Endothelial cell of umbilical vein (primary cell): ENCODE measurements at regions of chr15 and their contacts with region 1.

Region 1: GRCh38 chr15:79853458-79854328 is 43.1 kb downstream of the MTHFS start:
- DNase-seq: peak; percentile 88
- H3K4me3 ChIP-seq: no peak overlapping the region
- H3K27ac ChIP-seq: no peak overlapping the region
- H3K4me1 ChIP-seq: no peaks in the 10 kb centered on the region
- H3K27me3 ChIP-seq: no peaks in the 10 kb centered on the region
- CTCF ChIP-seq: peak; percentile 93 to 95
- POLR2A ChIP-seq: no peak

Region 2: DNA sequence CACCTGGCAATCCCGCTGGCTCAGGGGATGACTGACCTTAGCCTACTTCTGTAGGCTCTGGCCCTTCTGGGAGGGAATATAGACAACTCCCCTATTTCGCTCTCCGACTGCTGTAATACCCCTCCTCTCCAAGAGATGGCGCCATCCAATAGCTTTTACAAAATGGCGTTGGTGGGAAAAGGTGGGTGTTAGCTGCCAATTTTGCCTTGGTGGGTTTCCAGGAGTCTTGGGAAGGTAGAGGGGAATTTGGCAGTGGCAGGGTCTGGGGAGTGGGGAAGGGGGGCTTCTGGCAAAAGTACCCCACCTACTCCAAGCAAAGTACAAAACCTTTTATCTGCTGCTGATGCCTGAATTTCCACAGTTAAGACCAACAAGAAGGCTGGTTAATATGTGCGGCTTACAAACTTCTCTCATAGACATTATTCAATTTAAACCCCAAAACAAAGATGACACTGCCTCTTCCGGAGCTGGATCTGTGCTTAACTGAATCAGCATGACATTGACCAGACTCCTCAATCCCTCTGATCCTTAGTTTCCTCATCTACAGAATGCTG is 825.2 kb before region 1 on chr15:
- CTCF ChIA-PET with region 1: interaction called, 13 read pairs
- POLR2A ChIA-PET with region 1: no interaction called
- dilution Hi-C with region 1: no loop called
- intact Hi-C with region 1: loop called (anchors 2 kb)
- DNase-seq: peak; percentile 31
- H3K4me3 ChIP-seq: no peak overlapping the region
- H3K27ac ChIP-seq: no peak overlapping the region
- H3K4me1 ChIP-seq: no peaks in the 10 kb centered on the region
- H3K27me3 ChIP-seq: no peaks in the 10 kb centered on the region
- CTCF ChIP-seq: peak; percentile 78 to 80
- POLR2A ChIP-seq: no peak

Region 3: GRCh38 chr15:79364571-79365240 is 489.0 kb before region 1 on chr15:
- CTCF ChIA-PET with region 1: interaction called, 28 read pairs
- POLR2A ChIA-PET with region 1: no interaction called
- dilution Hi-C with region 1: no loop called
- intact Hi-C with region 1: no loop called
- DNase-seq: no peak
- H3K4me3 ChIP-seq: no peak overlapping the region
- H3K27ac ChIP-seq: no peak overlapping the region
- H3K4me1 ChIP-seq: no peaks in the 10 kb centered on the region
- H3K27me3 ChIP-seq: no peaks in the 10 kb centered on the region
- CTCF ChIP-seq: no peak
- POLR2A ChIP-seq: no peak

Region 4: GRCh38 chr15:79394231-79394630 is 459.5 kb before region 1 on chr15:
- CTCF ChIA-PET with region 1: interaction called, 11 read pairs
- POLR2A ChIA-PET with region 1: no interaction called
- dilution Hi-C with region 1: no loop called
- intact Hi-C with region 1: no loop called
- DNase-seq: peak; percentile 25
- H3K4me3 ChIP-seq: no peak overlapping the region
- H3K27ac ChIP-seq: no peak overlapping the region
- H3K4me1 ChIP-seq: no peaks in the 10 kb centered on the region
- H3K27me3 ChIP-seq: no peaks in the 10 kb centered on the region
- CTCF ChIP-seq: no peak
- POLR2A ChIP-seq: no peak

Region 5: DNA sequence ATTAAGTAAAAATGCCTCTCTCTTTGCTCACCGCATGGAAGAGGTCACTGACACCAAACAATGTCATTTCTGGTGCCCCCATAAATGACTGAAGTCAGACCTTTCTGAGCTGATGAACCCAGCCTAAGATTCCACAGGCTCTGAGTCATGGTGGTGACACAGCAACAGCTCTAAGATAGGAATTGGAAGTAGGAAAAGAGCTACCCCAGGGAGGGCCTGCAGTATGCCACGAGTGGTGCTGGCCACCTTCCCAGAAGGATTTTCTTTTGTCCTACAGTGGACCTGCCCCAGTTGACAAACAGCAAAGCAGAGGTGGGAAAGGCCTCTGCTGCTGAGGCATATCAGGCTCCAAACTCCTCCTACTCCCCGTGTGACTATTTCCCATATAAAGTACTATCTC is 213.5 kb before region 1 on chr15:
- CTCF ChIA-PET with region 1: interaction called, 4 read pairs
- POLR2A ChIA-PET with region 1: no interaction called
- dilution Hi-C with region 1: no loop called
- intact Hi-C with region 1: loop called (anchors 5 kb)
- DNase-seq: peak; percentile 74
- H3K4me3 ChIP-seq: no peak overlapping the region
- H3K27ac ChIP-seq: peak overlapping the region; percentile 15
- H3K4me1 ChIP-seq: peaks cover 33% of the 10 kb centered on the region
- H3K27me3 ChIP-seq: no peaks in the 10 kb centered on the region
- CTCF ChIP-seq: no peak
- POLR2A ChIP-seq: no peak

Region 6: GRCh38 chr15:79779746-79780145 is 73.9 kb before region 1 on chr15:
- CTCF ChIA-PET with region 1: no interaction called
- POLR2A ChIA-PET with region 1: no interaction called
- dilution Hi-C with region 1: no loop called
- intact Hi-C with region 1: no loop called
- DNase-seq: no peak
- H3K4me3 ChIP-seq: no peak overlapping the region
- H3K27ac ChIP-seq: no peak overlapping the region
- H3K4me1 ChIP-seq: no peaks in the 10 kb centered on the region
- H3K27me3 ChIP-seq: no peaks in the 10 kb centered on the region
- CTCF ChIP-seq: no peak
- POLR2A ChIP-seq: no peak

Region 7: DNA sequence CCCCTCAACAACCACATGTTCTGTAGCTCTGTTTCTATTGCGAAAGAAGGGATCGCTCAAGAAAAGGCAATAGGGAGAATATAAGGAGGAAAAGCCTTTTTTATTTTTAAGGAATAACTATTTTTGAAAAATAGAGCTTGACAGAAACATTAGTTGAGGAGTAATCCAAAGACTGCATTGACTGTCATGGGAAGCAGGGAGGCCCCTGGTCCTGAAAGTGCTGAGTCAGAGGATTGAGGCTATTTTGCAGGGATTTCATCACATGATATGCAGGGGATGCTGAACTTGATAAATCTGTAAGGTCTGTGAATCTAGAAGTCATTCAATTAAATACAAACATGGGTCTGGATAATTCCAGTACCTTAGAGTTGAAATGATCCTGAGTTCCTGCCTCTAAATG is 48.9 kb before region 1 on chr15:
- CTCF ChIA-PET with region 1: no interaction called
- POLR2A ChIA-PET with region 1: no interaction called
- dilution Hi-C with region 1: no loop called
- intact Hi-C with region 1: no loop called
- DNase-seq: no peak
- H3K4me3 ChIP-seq: no peak overlapping the region
- H3K27ac ChIP-seq: no peak overlapping the region
- H3K4me1 ChIP-seq: no peaks in the 10 kb centered on the region
- H3K27me3 ChIP-seq: no peaks in the 10 kb centered on the region
- CTCF ChIP-seq: no peak
- POLR2A ChIP-seq: no peak

Region 8: DNA sequence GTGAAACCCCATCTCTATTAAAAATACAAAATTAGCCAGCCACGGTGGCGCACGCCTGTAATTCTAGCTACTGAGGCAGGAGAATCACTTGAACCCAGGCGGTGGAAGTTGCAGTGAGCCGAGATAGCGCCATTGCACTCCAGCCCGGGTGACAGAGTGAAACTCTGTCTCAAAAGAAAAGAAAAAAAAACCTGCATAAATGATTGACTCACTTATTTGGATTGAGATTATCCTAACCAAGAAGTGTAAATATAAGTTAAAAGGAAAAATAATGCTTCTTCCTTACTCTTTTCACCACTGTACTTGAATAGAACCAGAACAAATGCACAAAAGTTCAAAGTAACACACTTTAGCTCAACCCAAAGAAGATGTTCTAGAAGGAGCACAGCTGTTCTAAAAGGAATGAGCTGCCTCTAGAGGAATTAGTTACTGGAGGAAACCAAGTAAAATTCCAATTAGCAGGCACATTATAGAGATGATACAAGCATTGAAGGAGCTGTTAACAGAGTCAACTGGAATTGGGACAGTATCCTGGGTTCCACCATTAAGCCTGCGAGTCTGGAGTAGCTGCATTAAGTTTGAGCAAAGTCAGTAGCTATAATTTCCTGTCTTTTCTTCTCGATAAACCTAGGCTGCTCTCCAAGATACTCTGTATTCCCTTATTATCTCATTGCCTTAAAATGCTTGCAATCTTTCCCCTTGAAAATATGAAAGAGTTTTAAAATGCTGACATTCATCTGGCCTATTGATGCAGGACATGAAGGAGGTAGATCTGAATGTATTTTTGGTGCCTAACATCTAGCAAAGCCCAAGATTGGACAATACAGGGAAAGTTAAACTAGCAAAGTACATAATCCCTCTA is 33.6 kb after region 1 on chr15:
- CTCF ChIA-PET with region 1: interaction called, 18 read pairs
- POLR2A ChIA-PET with region 1: no interaction called
- dilution Hi-C with region 1: no loop called
- intact Hi-C with region 1: no loop called
- DNase-seq: no peak
- H3K4me3 ChIP-seq: no peak overlapping the region
- H3K27ac ChIP-seq: no peak overlapping the region
- H3K4me1 ChIP-seq: no peaks in the 10 kb centered on the region
- H3K27me3 ChIP-seq: no peaks in the 10 kb centered on the region
- CTCF ChIP-seq: no peak
- POLR2A ChIP-seq: no peak

Region 9: DNA sequence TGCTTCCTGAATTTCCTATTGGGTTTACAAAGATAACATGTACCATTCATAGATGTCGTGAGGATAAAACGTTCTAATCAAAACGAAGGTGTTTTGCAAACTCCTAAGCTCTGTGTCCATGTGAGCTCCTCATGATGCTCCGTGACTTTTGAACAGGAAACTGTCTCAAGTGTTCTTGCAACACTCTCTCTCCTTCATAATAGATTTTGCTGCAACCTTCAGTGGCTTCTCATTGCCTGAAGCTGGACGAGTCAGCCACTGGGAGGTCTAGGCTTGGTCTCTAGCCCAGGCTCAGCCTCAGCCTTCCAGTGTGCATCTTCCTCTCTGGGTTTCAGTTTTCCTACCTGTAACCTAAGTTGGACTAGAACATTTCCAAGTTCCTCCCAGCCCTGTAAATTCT is 136.0 kb after region 1 on chr15:
- CTCF ChIA-PET with region 1: interaction called, 34 read pairs
- POLR2A ChIA-PET with region 1: no interaction called
- dilution Hi-C with region 1: no loop called
- intact Hi-C with region 1: loop called (anchors 2 kb)
- DNase-seq: no peak
- H3K4me3 ChIP-seq: no peak overlapping the region
- H3K27ac ChIP-seq: no peak overlapping the region
- H3K4me1 ChIP-seq: no peaks in the 10 kb centered on the region
- H3K27me3 ChIP-seq: peaks cover under 1 to 3% of the 10 kb centered on the region in 2 experiments
- CTCF ChIP-seq: no peak
- POLR2A ChIP-seq: no peak